GM13976 (cell line): ENCODE measurements at regions of chr12 and their contacts with region 1.

Region 1: GRCh38 chr12:24109381-24110039 is 160.0 kb upstream of the SOX5 start:
- DNase-seq: peak; percentile 66
- CTCF ChIP-seq: peak; percentile 37

Region 2: GRCh38 chr12:24596768-24597388 is 487.4 kb after region 1 on chr12:
- in situ Hi-C with region 1: loop called (anchors 25 kb)
- DNase-seq: peak; percentile 31
- CTCF ChIP-seq: peak; percentile 15